ENCODE measurements at regions of chr1 and their contacts with region 1.

Region 1: DNA sequence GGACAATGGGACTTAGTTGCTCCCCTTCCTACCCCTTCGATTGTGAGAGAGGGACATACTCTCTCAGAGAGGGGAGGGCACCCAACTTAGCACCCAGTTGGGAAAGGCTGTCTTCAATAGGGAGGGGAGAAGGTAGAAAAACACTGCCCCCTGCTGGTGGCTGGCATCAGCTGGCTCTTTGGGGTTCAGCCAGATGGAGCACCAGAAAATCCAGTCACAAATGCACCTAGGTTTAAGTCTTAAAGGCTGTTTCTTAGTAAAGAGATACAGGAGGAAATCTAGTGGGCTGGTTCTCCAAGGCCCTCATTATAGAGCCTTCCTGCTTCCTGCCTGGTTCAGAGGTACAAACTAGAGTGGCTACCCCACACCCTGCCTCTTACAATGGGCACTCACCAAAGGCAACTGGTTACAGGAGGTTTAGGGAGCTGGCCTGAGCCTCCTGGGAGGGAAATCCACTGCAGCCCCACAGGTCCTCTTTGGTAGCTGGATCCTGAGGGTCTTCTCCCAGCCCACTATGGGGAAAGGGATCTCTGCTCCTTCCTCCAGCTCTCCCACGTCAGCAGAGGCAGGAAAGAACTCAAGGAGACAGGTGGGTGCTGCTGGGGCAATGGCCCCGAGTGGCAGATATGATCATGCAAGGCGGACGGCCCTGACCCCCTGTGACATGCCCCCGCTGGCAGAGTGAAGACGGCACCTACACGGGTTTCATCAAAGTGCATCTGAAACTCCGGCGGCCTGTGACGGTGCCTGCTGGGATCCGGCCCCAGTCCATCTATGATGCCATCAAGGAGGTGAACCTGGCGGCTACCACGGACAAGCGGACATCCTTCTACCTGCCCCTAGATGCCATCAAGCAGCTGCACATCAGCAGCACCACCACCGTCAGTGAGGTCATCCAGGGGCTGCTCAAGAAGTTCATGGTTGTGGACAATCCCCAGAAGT is 28.3 kb downstream of the EIF2D start:
- DNase-seq: peak; percentile 77 to 85 (median 79)
- H3K4me3 ChIP-seq: no peak overlapping the region
- H3K4me3 Mint-ChIP-seq: peak overlapping the region in 1 of 2 donors; percentile 63
- H3K27ac ChIP-seq: peak overlapping the region; percentile 69 to 96
- H3K27ac Mint-ChIP-seq: peak overlapping the region; percentile 95 to 100 (median 99)
- H3K4me1 ChIP-seq: peaks cover 47 to 51% of the 10 kb centered on the region in 2 donors
- H3K4me1 Mint-ChIP-seq: peaks cover 48% of the 10 kb centered on the region
- H3K27me3 ChIP-seq: no peaks in the 10 kb centered on the region
- H3K27me3 Mint-ChIP-seq: no peaks in the 10 kb centered on the region
- CTCF ChIP-seq: peak; percentile 98

Region 2: GRCh38 chr1:206469933-206470691 is 113.9 kb before region 1 on chr1 and contains the start of gene IKBKE:
- intact Hi-C with region 1: loop called in 1 of 2 experiments (anchors 5 kb)
- DNase-seq: peak; percentile 80 to 88 (median 84)
- H3K4me3 ChIP-seq: peak within 1 kb of the TSS; percentile 60 to 89 (median 88)
- H3K4me3 Mint-ChIP-seq: peak within 1 kb of the TSS; percentile 83 to 92
- H3K27ac ChIP-seq: peak within 1 kb of the TSS; percentile 83 to 94
- H3K27ac Mint-ChIP-seq: peak within 1 kb of the TSS; percentile 99 to 100 (median 100)
- H3K4me1 ChIP-seq: peaks cover 79 to 84% of the 10 kb centered on the region in 2 donors
- H3K4me1 Mint-ChIP-seq: peaks cover 80% of the 10 kb centered on the region
- H3K27me3 ChIP-seq: no peaks in the 10 kb centered on the region
- H3K27me3 Mint-ChIP-seq: peaks cover 0 to 5% (median 0%) of the 10 kb centered on the region in 3 donors
- CTCF ChIP-seq: peak; percentile 22
- polyA plus RNA-seq, gene IKBKE: 35.6 to 40.7 (median 37.6) TPM

Region 3: GRCh38 chr1:206489980-206490770 is 93.8 kb before region 1 on chr1:
- intact Hi-C with region 1: loop called (anchors 5 kb)
- DNase-seq: peak; percentile 40 to 63 (median 43)
- H3K4me3 ChIP-seq: no peak overlapping the region
- H3K4me3 Mint-ChIP-seq: no peak overlapping the region
- H3K27ac ChIP-seq: no peak overlapping the region
- H3K27ac Mint-ChIP-seq: peak overlapping the region in 3 of 7 donors; percentile 40 to 59 (median 50)
- H3K4me1 ChIP-seq: peaks cover 17 to 20% of the 10 kb centered on the region in 2 donors
- H3K4me1 Mint-ChIP-seq: peaks cover 21% of the 10 kb centered on the region
- H3K27me3 ChIP-seq: no peaks in the 10 kb centered on the region
- H3K27me3 Mint-ChIP-seq: peaks cover 0 to 2% (median 0%) of the 10 kb centered on the region in 3 donors
- CTCF ChIP-seq: peak; percentile 85

Region 4: DNA sequence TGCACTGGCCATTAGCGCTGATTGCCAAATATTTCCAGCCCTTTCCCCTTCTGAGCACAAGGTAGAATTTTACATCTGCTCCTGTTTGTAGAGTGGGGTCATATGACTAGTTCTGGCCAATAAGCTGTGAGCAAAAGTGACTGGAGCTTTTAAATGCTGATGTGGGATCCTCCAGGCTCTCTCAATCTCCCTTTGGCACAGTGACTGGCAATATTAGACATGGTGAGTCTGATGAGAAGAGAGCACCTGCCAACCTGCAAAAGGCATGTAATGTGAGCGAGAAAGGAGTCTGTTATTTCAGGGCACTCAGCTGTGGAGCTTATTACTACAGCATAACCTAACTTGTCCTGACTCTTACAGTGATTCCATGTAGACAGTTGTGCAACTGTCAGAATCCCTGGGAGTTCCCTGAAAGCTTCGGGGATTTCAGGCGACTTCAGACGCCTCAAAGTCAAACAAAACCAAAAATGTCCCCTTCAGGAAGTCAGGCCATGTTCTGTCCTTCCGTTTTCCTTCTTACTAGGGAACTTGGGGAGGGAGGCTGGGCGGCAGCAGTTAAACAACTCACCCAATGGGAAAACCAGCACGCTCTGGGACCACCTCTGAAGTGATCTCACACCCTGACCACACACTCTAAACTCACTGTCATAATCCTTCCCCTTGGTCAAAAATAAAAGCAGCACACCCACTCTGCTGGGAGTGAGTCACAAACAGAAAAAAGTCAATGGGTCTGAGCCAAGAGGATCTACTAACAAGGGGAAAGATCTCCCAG is 80.2 kb before region 1 on chr1:
- intact Hi-C with region 1: loop called in 1 of 2 experiments (anchors 2 kb)
- DNase-seq: peak; percentile 91 to 99 (median 92)
- H3K4me3 ChIP-seq: peak overlapping the region in 1 of 3 experiments; percentile 31
- H3K4me3 Mint-ChIP-seq: peak overlapping the region; percentile 5 to 76
- H3K27ac ChIP-seq: peak overlapping the region in 1 of 2 donors; percentile 48
- H3K27ac Mint-ChIP-seq: peak overlapping the region; percentile 74 to 95 (median 83)
- H3K4me1 ChIP-seq: peaks cover 37 to 63% of the 10 kb centered on the region in 2 donors
- H3K4me1 Mint-ChIP-seq: peaks cover 57% of the 10 kb centered on the region
- H3K27me3 ChIP-seq: peaks cover 15 to 30% of the 10 kb centered on the region in 2 donors
- H3K27me3 Mint-ChIP-seq: peaks cover 32 to 41% (median 33%) of the 10 kb centered on the region in 3 donors
- CTCF ChIP-seq: no peak

Region 5: GRCh38 chr1:206517784-206518183 is 66.2 kb before region 1 on chr1:
- intact Hi-C with region 1: loop called in 1 of 2 experiments (anchors 2 kb)
- DNase-seq: no peak
- H3K4me3 ChIP-seq: no peak overlapping the region
- H3K4me3 Mint-ChIP-seq: no peak overlapping the region
- H3K27ac ChIP-seq: no peak overlapping the region
- H3K27ac Mint-ChIP-seq: peak overlapping the region in 3 of 7 donors; percentile 36 to 90 (median 45)
- H3K4me1 ChIP-seq: peaks cover 33 to 38% of the 10 kb centered on the region in 2 donors
- H3K4me1 Mint-ChIP-seq: peaks cover 33% of the 10 kb centered on the region
- H3K27me3 ChIP-seq: peaks cover 0 to 9% of the 10 kb centered on the region in 2 donors
- H3K27me3 Mint-ChIP-seq: peaks cover 8 to 19% (median 17%) of the 10 kb centered on the region in 3 donors
- CTCF ChIP-seq: no peak

Region 6: GRCh38 chr1:206544562-206545257 is 39.3 kb before region 1 on chr1:
- intact Hi-C with region 1: loop called (anchors 1 to 2 kb)
- DNase-seq: peak; percentile 64 to 72 (median 70)
- H3K4me3 ChIP-seq: no peak overlapping the region
- H3K4me3 Mint-ChIP-seq: no peak overlapping the region
- H3K27ac ChIP-seq: no peak overlapping the region
- H3K27ac Mint-ChIP-seq: peak overlapping the region in 2 of 7 donors; percentile 35 to 50
- H3K4me1 ChIP-seq: no peaks in the 10 kb centered on the region
- H3K4me1 Mint-ChIP-seq: peaks cover 2% of the 10 kb centered on the region
- H3K27me3 ChIP-seq: no peaks in the 10 kb centered on the region
- H3K27me3 Mint-ChIP-seq: peaks cover 0 to 2% (median 0%) of the 10 kb centered on the region in 3 donors
- CTCF ChIP-seq: peak; percentile 95

Region 7: DNA sequence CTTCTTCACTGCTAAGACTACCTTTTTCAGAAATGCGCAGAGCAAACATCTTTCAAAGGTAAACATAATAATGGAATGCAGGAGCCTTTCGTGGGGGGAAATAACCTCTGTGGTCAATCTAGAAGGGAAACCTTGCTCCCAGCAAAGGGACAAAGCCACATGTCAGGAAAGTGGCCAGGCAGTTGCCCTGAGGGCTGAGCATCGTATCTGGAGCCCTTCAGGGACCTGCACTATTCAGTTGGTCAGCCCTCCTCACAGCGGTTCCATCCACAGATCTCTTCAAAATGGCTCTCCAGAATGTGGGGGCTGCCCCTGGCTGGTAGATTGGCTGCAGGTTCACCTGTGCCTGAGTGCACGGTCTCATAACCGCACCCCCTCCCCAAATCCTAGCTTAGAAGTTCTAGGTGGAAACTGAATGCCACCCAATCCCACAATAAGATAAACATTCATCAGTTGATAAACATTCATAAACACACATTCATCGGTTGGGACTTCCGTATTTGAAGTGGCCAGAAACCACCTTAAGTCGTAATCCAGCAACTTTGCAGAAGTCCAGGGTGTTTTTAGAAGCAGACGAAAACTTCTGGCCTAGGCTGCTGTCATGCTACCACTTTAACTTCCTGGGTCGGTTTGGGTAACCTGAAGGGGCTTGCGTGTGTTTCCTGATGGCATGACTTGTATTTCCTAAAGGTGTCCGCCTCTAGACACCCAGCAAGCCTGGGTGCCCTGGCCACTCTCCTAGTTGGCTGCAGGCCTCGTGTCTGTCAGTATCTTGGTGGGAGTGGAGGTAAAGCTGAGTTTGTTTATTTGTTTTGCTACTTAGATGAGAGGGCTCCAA is 26.1 kb before region 1 on chr1:
- intact Hi-C with region 1: loop called in 1 of 2 experiments (anchors 2 kb)
- DNase-seq: peak; percentile 88 to 95 (median 94)
- H3K4me3 ChIP-seq: peak overlapping the region; percentile 93 to 99 (median 95)
- H3K4me3 Mint-ChIP-seq: peak overlapping the region; percentile 98 to 99
- H3K27ac ChIP-seq: peak overlapping the region; percentile 93 to 100
- H3K27ac Mint-ChIP-seq: peak overlapping the region; percentile 99 to 100 (median 99)
- H3K4me1 ChIP-seq: peaks cover 47 to 61% of the 10 kb centered on the region in 2 donors
- H3K4me1 Mint-ChIP-seq: peaks cover 62% of the 10 kb centered on the region
- H3K27me3 ChIP-seq: no peaks in the 10 kb centered on the region
- H3K27me3 Mint-ChIP-seq: peaks cover 0 to 5% (median 1%) of the 10 kb centered on the region in 3 donors
- CTCF ChIP-seq: no peak

Region 8: DNA sequence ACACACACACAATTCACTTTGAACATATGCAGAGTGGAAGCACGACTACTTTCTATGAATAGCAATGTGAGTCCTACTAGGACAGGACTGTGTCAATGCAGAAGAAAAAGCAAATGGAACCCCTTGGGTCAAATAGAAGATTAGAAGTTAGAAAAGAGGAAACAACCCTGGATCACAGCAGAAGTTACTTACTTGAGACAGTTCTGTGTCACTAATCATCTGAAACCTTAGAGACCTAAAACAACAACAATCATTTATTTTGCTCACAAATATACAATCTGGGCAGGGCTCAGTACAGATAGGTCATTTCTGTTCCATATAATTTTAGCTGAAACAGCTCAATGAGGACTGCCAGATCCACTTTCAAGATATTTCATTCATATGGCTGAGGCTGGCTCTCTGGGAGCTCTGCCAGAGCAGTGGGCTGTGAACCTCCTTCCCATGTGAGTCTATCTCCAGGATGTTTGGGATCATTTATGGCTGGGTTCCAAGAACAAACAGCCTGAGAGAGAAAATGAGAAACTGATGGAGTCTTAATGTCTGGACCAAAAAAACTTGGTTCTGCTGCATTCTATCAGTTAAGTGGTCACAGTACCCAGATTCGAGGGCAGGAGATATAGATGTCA is 230.9 kb after region 1 on chr1:
- intact Hi-C with region 1: no loop called
- DNase-seq: peak in 1 of 3 donors; percentile 31
- H3K4me3 ChIP-seq: no peak overlapping the region
- H3K4me3 Mint-ChIP-seq: no peak overlapping the region
- H3K27ac ChIP-seq: no peak overlapping the region
- H3K27ac Mint-ChIP-seq: peak overlapping the region in 3 of 7 donors; percentile 17 to 79 (median 77)
- H3K4me1 ChIP-seq: peaks cover 0 to 4% of the 10 kb centered on the region in 2 donors
- H3K4me1 Mint-ChIP-seq: peaks cover 10% of the 10 kb centered on the region
- H3K27me3 ChIP-seq: no peaks in the 10 kb centered on the region
- H3K27me3 Mint-ChIP-seq: peaks cover 0 to 2% (median 0%) of the 10 kb centered on the region in 3 donors
- CTCF ChIP-seq: no peak

Measured in CD14-positive monocyte (primary cell).